Psoas muscle (tissue), 8 donors: ENCODE measurements at regions of chr3 and their contacts with region 1.

Region 1: DNA sequence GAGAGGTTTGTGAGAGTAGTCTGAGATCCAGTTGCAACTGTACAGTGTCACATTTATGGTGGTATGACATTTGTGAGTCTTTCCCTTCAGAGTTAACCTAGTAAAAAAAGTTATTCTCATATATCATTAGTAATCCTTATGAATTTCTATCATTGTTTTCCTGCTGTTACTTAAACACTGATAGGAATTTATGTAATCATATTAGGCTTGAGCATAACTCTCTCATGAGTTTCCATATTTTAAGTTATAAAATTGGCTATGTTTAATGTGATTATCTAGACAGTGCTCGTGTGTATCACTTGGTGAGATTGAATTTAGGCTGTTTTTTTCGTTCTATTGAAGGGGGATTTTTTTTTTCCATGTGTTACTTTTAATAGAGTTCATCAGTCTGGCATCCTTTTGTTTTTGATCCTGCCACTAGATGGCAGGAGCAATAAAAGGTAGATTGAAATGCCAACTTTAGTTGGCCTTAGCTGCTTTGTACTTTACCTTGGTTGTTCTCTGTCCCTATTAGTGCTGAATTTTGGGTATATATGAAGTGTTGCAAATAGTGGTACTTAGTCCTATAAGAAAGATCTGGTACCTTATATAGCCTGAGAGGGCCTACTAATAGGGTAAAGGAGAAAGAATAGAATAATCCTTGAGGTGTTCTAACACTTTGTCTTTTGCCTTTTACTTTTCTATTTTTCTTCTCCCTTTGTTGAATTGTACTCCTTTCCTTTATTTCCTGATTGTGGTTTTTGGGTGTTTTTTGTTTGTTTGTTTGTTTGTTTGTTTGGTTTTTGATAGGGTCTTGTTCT is 17.9 kb downstream of the STT3B start:
- DNase-seq: no peak
- ATAC-seq: peak in 3 of 4 donors; percentile 62 to 87 (median 69)
- H3K4me3 ChIP-seq: no peak overlapping the region
- H3K27ac ChIP-seq: no peak overlapping the region
- H3K4me1 ChIP-seq: peaks cover 65% of the 10 kb centered on the region
- H3K27me3 ChIP-seq: no peaks in the 10 kb centered on the region
- CTCF ChIP-seq: peak; percentile 73

Region 2: DNA sequence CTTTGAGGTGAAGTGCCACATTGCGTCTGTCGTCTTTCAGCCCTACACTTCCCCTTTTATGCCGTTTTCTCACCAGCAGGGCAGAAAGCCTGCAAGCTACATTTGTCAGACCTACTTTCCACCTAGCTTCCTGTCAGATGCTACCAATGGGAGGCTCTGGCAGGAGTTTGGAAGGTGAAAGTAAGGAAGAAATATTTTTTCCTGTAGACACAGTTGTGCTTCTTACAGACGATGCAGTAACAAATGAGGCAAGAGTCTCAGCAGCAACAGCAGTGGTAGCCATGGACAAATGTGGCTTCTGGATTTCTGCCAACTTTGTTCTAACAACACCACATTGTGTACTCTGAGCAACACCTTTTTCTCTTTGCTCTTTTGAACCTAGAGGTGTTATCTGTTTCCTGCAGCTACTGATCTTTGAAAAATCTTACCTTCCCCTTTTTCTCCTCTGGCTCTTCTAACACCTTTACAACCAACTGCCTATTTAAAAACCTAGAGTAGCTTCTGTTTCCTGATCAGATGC is 88.5 kb before region 1 on chr3:
- intact Hi-C with region 1: no loop called
- DNase-seq: no peak
- ATAC-seq: no peak
- H3K4me3 ChIP-seq: no peak overlapping the region
- H3K27ac ChIP-seq: no peak overlapping the region
- H3K4me1 ChIP-seq: peaks cover 6% of the 10 kb centered on the region
- H3K27me3 ChIP-seq: no peaks in the 10 kb centered on the region
- CTCF ChIP-seq: no peak

Region 3: GRCh38 chr3:31495971-31496665 is 54.5 kb before region 1 on chr3:
- intact Hi-C with region 1: no loop called
- DNase-seq: no peak
- ATAC-seq: no peak
- H3K4me3 ChIP-seq: no peak overlapping the region
- H3K27ac ChIP-seq: no peak overlapping the region
- H3K4me1 ChIP-seq: no peaks in the 10 kb centered on the region
- H3K27me3 ChIP-seq: no peaks in the 10 kb centered on the region
- CTCF ChIP-seq: no peak

Region 4: DNA sequence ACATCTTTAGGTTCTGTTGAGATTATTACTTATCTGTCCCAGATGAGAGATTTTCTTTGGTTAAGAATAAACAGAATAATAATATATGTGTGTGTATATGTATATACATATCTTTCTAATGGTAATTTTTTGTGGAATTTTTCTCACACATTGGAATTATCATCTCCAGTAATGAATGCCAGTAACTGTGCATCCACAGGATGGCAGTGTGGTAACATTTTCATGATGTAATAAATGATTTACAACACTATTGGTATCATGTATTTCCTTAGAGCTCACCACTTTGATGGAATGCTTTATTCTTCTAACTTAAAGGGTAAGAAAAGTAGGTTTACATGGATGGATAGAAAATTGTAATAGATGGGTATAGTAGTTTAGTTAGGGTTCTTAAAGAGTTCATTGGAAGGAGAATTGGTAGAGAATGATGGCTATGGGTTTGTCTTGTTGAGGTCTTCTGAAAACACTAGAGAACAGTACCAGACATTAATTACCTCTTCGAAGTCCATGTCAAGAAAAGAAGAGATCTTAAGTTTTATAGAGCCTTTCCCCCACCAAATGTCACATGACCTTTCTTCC is 60.1 kb after region 1 on chr3:
- intact Hi-C with region 1: loop called in 1 of 2 experiments (anchors 5 kb)
- DNase-seq: no peak
- ATAC-seq: peak in 1 of 4 donors; percentile 60
- H3K4me3 ChIP-seq: no peak overlapping the region
- H3K27ac ChIP-seq: no peak overlapping the region
- H3K4me1 ChIP-seq: peaks cover 17% of the 10 kb centered on the region
- H3K27me3 ChIP-seq: no peaks in the 10 kb centered on the region
- CTCF ChIP-seq: peak; percentile 39

Region 5: GRCh38 chr3:31768479-31769123 is 217.9 kb after region 1 on chr3:
- intact Hi-C with region 1: loop called (anchors 2 to 5 kb)
- DNase-seq: peak; percentile 35 to 56
- ATAC-seq: peak; percentile 43 to 84 (median 60)
- H3K4me3 ChIP-seq: no peak overlapping the region
- H3K27ac ChIP-seq: no peak overlapping the region
- H3K4me1 ChIP-seq: no peaks in the 10 kb centered on the region
- H3K27me3 ChIP-seq: no peaks in the 10 kb centered on the region
- CTCF ChIP-seq: peak; percentile 69